ENCODE measurements at regions of chr17 and their contacts with region 1.

Region 1: DNA sequence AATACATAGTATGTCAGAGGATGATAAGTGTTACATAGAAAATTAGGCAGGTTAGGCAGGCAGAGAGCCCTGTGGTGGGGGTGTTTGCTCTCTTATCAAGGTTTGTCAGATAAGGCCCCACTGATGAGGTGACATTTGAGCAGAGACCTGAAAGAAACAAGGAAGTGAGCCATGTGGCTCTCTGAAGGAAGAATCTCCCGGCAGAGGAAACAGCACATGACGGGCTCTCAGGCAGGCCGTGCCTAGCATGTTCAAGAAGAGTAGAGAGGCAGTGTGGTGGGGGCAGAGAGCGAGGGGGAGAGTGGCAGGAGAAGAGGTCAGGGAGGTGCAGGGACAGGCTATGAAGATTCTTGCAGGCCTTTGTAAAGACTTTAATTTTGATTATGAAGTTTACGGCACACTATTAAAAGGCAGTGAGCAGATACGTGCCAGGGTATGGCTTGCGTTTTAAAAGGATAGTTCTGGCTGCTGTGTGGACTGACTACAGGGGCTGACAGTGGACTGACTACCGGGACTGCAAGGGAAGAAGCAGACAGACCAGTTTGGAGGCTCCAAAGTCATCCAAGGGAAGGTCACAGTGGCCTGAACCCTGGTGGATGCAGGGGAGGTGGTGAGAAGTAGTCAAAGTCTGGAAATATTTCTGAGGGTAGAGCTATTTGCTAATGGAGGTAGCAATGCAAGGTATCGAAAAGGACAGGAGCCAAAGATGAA is 82.2 kb upstream of the ASIC2 start:
- DNase-seq: no peak
- ATAC-seq: no peak
- H3K4me3 ChIP-seq: no peak overlapping the region
- H3K27ac ChIP-seq: no peak overlapping the region
- H3K4me1 ChIP-seq: no peaks in the 10 kb centered on the region
- H3K27me3 ChIP-seq: peaks cover 0 to 45% (median 9%) of the 10 kb centered on the region in 7 donors
- CTCF ChIP-seq: no peak

Region 2: GRCh38 chr17:33302394-33302793 is 72.9 kb before region 1 on chr17:
- intact Hi-C with region 1: loop called in 1 of 10 experiments (anchors 2 kb)
- DNase-seq: no peak
- ATAC-seq: no peak
- H3K4me3 ChIP-seq: no peak overlapping the region
- H3K27ac ChIP-seq: no peak overlapping the region
- H3K4me1 ChIP-seq: no peaks in the 10 kb centered on the region
- H3K27me3 ChIP-seq: peaks cover 0 to 62% (median 34%) of the 10 kb centered on the region in 7 donors
- CTCF ChIP-seq: no peak

Region 3: GRCh38 chr17:33318241-33318640 is 57.0 kb before region 1 on chr17:
- intact Hi-C with region 1: no loop called
- DNase-seq: no peak
- ATAC-seq: no peak
- H3K4me3 ChIP-seq: no peak overlapping the region
- H3K27ac ChIP-seq: no peak overlapping the region
- H3K4me1 ChIP-seq: no peaks in the 10 kb centered on the region
- H3K27me3 ChIP-seq: peaks cover 0 to 85% (median 47%) of the 10 kb centered on the region in 7 donors
- CTCF ChIP-seq: no peak

Region 4: GRCh38 chr17:33436321-33436720 is 61.1 kb after region 1 on chr17:
- intact Hi-C with region 1: no loop called
- DNase-seq: no peak
- ATAC-seq: peak in 3 of 8 donors; percentile 29 to 50 (median 46)
- H3K4me3 ChIP-seq: no peak overlapping the region
- H3K27ac ChIP-seq: no peak overlapping the region
- H3K4me1 ChIP-seq: no peaks in the 10 kb centered on the region
- H3K27me3 ChIP-seq: peaks cover 0 to 4% (median 0%) of the 10 kb centered on the region in 7 donors
- CTCF ChIP-seq: no peak